ENCODE measurements at regions of chr7 and their contacts with region 1.

Region 1: DNA sequence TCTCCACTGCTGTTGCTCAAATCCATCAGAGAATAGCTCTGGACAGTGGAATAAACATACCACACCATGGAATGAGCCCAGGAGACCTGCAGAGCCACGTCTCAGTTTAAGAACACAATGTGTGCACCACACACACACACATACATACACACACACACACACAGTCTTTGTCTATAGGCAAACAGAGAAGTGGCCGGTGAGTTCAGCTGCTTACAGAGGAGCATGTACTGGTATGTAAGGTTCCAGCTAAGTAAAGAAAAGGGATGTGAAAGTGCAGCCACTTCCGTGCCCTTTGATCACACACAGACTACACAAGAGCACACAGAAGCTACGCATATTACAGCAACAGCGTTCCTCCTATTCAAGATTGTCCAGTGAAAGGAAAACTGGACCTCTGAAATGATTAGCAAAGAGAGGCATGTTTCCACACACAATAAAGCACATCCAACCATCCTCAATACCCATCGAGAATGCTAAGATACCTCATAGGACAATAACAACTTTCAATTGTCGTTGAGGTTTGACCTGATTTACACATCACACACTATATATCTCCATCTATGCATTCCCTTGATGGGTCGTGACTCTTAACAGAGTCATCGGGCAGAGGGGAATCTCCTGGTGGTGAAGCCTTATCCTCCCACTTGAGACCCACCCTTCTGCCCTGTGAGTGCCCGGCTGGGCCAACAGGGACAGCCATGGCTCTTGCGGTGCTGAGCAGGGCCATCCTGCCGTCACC is 23.6 kb downstream of the SLC35B4 start:
- DNase-seq: peak; percentile 84
- ATAC-seq: peak; percentile 100
- H3K4me3 ChIP-seq: no peak overlapping the region
- H3K27ac ChIP-seq: peak overlapping the region; percentile 58
- H3K4me1 ChIP-seq: peaks cover 11% of the 10 kb centered on the region
- H3K27me3 ChIP-seq: no peaks in the 10 kb centered on the region
- CTCF ChIP-seq: no peak
- EP300 ChIP-seq: peak; percentile 60 to 86; a peak in 3 of 4 replicates
- POLR2A ChIP-seq: no peak
- RAD21 ChIP-seq: no peak

Region 2: DNA sequence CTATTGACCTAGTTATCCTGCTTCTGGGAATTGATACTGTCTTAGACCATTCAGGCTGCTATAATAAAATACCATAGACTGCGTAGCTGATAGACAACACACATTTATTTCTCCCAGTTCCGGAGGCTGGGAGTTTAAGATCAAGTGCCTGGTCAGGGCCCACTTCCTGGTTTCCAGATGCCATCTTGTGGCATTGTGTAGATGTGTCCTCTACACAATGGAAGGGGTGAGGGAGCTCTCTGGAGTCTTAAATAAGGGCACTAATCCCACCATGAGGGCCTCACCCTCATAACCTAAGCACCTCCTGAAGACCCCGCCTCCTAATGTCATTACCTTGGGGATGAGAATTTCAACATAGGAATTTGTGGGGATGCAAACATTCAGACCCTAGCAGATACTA is 38.9 kb before region 1 on chr7:
- CTCF ChIA-PET with region 1: no interaction called
- POLR2A ChIA-PET with region 1: no interaction called
- RAD21 ChIA-PET with region 1: no interaction called
- SMC1A ChIA-PET with region 1: no interaction called
- in situ Hi-C with region 1: no loop called
- intact Hi-C with region 1: no loop called
- DNase-seq: no peak
- ATAC-seq: no peak
- H3K4me3 ChIP-seq: no peak overlapping the region
- H3K27ac ChIP-seq: no peak overlapping the region
- H3K4me1 ChIP-seq: no peaks in the 10 kb centered on the region
- H3K27me3 ChIP-seq: no peaks in the 10 kb centered on the region
- CTCF ChIP-seq: peak in 1 of 3 experiments; percentile 15; a peak in 1 of 6 replicates
- EP300 ChIP-seq: no peak
- POLR2A ChIP-seq: no peak
- RAD21 ChIP-seq: 0 out of 2 replicates have a peak, but pooled peaks have one; percentile 16

Region 3: GRCh38 chr7:134316539-134317344 is 23.6 kb after region 1 on chr7 and contains the start of gene SLC35B4:
- CTCF ChIA-PET with region 1: interaction called, 6 read pairs
- POLR2A ChIA-PET with region 1: interaction called, 10 read pairs
- RAD21 ChIA-PET with region 1: interaction called, 8 read pairs
- SMC1A ChIA-PET with region 1: interaction called, 10 read pairs
- in situ Hi-C with region 1: no loop called
- intact Hi-C with region 1: loop called (anchors 1 kb)
- DNase-seq: peak; percentile 86
- ATAC-seq: peak; percentile 99
- H3K4me3 ChIP-seq: peak within 1 kb of the TSS; percentile 76
- H3K27ac ChIP-seq: peak within 1 kb of the TSS; percentile 62
- H3K4me1 ChIP-seq: no peaks in the 10 kb centered on the region
- H3K27me3 ChIP-seq: no peaks in the 10 kb centered on the region
- CTCF ChIP-seq: peak in 2 of 3 experiments; percentile 18 to 25; a peak in 1 of 6 replicates
- EP300 ChIP-seq: no peak
- POLR2A ChIP-seq: peak; percentile 80
- RAD21 ChIP-seq: no peak
- polyA plus RNA-seq, gene SLC35B4: 3.6 to 6.0 TPM

Measured in GM12878 (cell line).